ENCODE measurements at regions of chr15 and their contacts with region 1.

Region 1: GRCh38 chr15:40274350-40275274 is 8.3 kb downstream of the ANKRD63 start:
- DNase-seq: peak; percentile 90
- ATAC-seq: peak; percentile 87
- H3K4me3 ChIP-seq: no peak overlapping the region
- H3K27ac ChIP-seq: no peak overlapping the region
- H3K4me1 ChIP-seq: peaks cover 5% of the 10 kb centered on the region
- H3K27me3 ChIP-seq: peaks cover 6% of the 10 kb centered on the region
- CTCF ChIP-seq: peak; percentile 100

Region 2: GRCh38 chr15:40044717-40045571 is 229.7 kb before region 1 on chr15:
- intact Hi-C with region 1: loop called (anchors 5 kb)
- DNase-seq: peak; percentile 93
- ATAC-seq: peak; percentile 95
- H3K4me3 ChIP-seq: no peak overlapping the region
- H3K27ac ChIP-seq: no peak overlapping the region
- H3K4me1 ChIP-seq: peaks cover 48% of the 10 kb centered on the region
- H3K27me3 ChIP-seq: no peaks in the 10 kb centered on the region
- CTCF ChIP-seq: peak; percentile 94

Region 3: GRCh38 chr15:40217159-40217824 is 57.3 kb before region 1 on chr15:
- intact Hi-C with region 1: loop called (anchors 5 kb)
- DNase-seq: no peak
- ATAC-seq: peak; percentile 99
- H3K4me3 ChIP-seq: no peak overlapping the region
- H3K27ac ChIP-seq: no peak overlapping the region
- H3K4me1 ChIP-seq: no peaks in the 10 kb centered on the region
- H3K27me3 ChIP-seq: no peaks in the 10 kb centered on the region
- CTCF ChIP-seq: peak; percentile 92

Region 4: GRCh38 chr15:40421246-40422157 is 146.9 kb after region 1 on chr15:
- intact Hi-C with region 1: loop called (anchors 5 kb)
- DNase-seq: peak; percentile 92
- ATAC-seq: peak; percentile 94
- H3K4me3 ChIP-seq: no peak overlapping the region
- H3K27ac ChIP-seq: no peak overlapping the region
- H3K4me1 ChIP-seq: peaks cover 20% of the 10 kb centered on the region
- H3K27me3 ChIP-seq: no peaks in the 10 kb centered on the region
- CTCF ChIP-seq: peak; percentile 94

Measured in upper lobe of right lung (tissue), 1 donor.